ENCODE measurements at regions of chr1 and their contacts with region 1.

Region 1: DNA sequence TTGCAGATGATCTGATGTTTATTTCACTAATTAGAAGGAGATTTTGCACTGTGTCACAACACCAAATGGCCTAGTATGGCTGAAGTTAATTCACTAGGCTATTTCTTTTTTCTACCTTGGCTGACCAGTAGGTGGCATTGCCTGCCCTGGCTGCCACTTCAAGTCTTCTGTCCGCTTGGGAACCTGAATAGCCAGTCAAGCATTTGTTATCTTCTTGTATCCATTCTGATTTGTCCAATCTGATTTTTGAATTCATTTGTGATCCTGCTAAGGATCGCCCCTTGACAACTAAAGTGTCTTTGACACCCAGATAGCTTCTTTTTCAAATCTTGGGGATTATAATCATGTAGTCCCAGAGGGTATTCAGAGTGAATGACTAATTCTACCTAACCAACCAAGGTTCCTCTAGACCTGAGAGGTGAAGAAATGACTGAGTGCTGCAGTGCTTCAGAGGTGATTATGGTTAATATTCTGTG is 99.4 kb downstream of the GIPC2 start:
- DNase-seq: no peak
- H3K4me3 ChIP-seq: no peak overlapping the region
- H3K27ac ChIP-seq: no peak overlapping the region
- H3K4me1 ChIP-seq: peaks cover 0 to 17% (median 10%) of the 10 kb centered on the region in 6 donors
- H3K27me3 ChIP-seq: no peaks in the 10 kb centered on the region
- CTCF ChIP-seq: peak in 10 of 11 experiments; percentile 28 to 82 (median 61)
- POLR2A ChIP-seq: no peak

Region 2: GRCh38 chr1:77857552-77857951 is 287.6 kb before region 1 on chr1:
- intact Hi-C with region 1: no loop called
- DNase-seq: no peak
- H3K4me3 ChIP-seq: no peak overlapping the region
- H3K27ac ChIP-seq: no peak overlapping the region
- H3K4me1 ChIP-seq: no peaks in the 10 kb centered on the region
- H3K27me3 ChIP-seq: no peaks in the 10 kb centered on the region
- CTCF ChIP-seq: no peak
- POLR2A ChIP-seq: no peak

Region 3: GRCh38 chr1:78009836-78010235 is 135.3 kb before region 1 on chr1:
- intact Hi-C with region 1: no loop called
- DNase-seq: no peak
- H3K4me3 ChIP-seq: peak overlapping the region in 4 of 8 donors; percentile 8 to 54 (median 31)
- H3K27ac ChIP-seq: peak overlapping the region in 5 of 8 donors; percentile 6 to 92 (median 33)
- H3K4me1 ChIP-seq: peaks cover 3 to 56% (median 17%) of the 10 kb centered on the region in 6 donors
- H3K27me3 ChIP-seq: no peaks in the 10 kb centered on the region
- CTCF ChIP-seq: no peak
- POLR2A ChIP-seq: no peak

Region 4: GRCh38 chr1:78060857-78061563 is 84.1 kb before region 1 on chr1:
- intact Hi-C with region 1: no loop called
- DNase-seq: no peak
- H3K4me3 ChIP-seq: no peak overlapping the region
- H3K27ac ChIP-seq: peak overlapping the region in 4 of 8 donors; percentile 32 to 66 (median 51)
- H3K4me1 ChIP-seq: peaks cover 0 to 13% (median 0%) of the 10 kb centered on the region in 6 donors
- H3K27me3 ChIP-seq: no peaks in the 10 kb centered on the region
- CTCF ChIP-seq: no peak
- POLR2A ChIP-seq: no peak

Region 5: DNA sequence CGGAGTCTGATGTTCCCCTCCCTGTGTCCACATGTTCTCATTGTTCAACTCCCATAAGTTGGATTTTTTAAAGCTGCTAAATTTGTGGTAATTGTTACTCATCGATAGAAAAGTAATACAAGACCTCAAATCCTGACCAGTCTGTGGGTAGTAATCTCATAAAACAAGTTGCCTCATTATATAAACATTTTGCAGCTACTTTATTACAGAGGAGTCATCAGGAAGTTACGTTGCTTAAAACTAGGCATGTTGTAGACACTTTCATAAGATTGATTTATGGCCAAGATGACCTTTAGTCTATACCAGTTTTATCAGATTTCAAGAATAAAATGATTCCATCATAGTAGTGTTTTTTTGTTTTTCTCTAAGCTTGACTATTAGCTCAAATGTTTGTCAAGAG is 109.4 kb after region 1 on chr1:
- intact Hi-C with region 1: no loop called
- DNase-seq: no peak
- H3K4me3 ChIP-seq: no peak overlapping the region
- H3K27ac ChIP-seq: no peak overlapping the region
- H3K4me1 ChIP-seq: no peaks in the 10 kb centered on the region
- H3K27me3 ChIP-seq: peaks cover 0 to 7% (median 0%) of the 10 kb centered on the region in 7 donors
- CTCF ChIP-seq: no peak
- POLR2A ChIP-seq: no peak

Region 6: GRCh38 chr1:78607334-78607927 is 462.3 kb after region 1 on chr1:
- intact Hi-C with region 1: loop called (anchors 5 kb)
- DNase-seq: no peak
- H3K4me3 ChIP-seq: no peak overlapping the region
- H3K27ac ChIP-seq: no peak overlapping the region
- H3K4me1 ChIP-seq: no peaks in the 10 kb centered on the region
- H3K27me3 ChIP-seq: peaks cover 0 to 8% (median 0%) of the 10 kb centered on the region in 7 donors
- CTCF ChIP-seq: peak in 6 of 11 experiments; percentile 18 to 44 (median 40)
- POLR2A ChIP-seq: no peak

Region 7: GRCh38 chr1:78676347-78676982 is 531.3 kb after region 1 on chr1:
- intact Hi-C with region 1: loop called (anchors 10 kb)
- DNase-seq: no peak
- H3K4me3 ChIP-seq: no peak overlapping the region
- H3K27ac ChIP-seq: no peak overlapping the region
- H3K4me1 ChIP-seq: peaks cover 0 to 8% (median 6%) of the 10 kb centered on the region in 6 donors
- H3K27me3 ChIP-seq: no peaks in the 10 kb centered on the region
- CTCF ChIP-seq: peak; percentile 65 to 91 (median 82)
- POLR2A ChIP-seq: no peak